Activated CD4-positive, alpha-beta T cell treated with anti-CD3 and anti-CD28 coated beads, Interleukin-2, amount 10 ng/mL, durations not matched to agents 24 days and 14 days (primary cell): ENCODE measurements at regions of chr4 and their contacts with region 1.

Region 1: GRCh38 chr4:176277162-176277904 is 8.3 kb upstream of the ASB5 start:
- DNase-seq: peak; percentile 61
- H3K4me3 Mint-ChIP-seq: no peak overlapping the region
- H3K27ac Mint-ChIP-seq: no peak overlapping the region
- H3K4me1 Mint-ChIP-seq: no peaks in the 10 kb centered on the region
- H3K27me3 Mint-ChIP-seq: peaks cover 3% of the 10 kb centered on the region

Region 2: GRCh38 chr4:176150356-176150682 is 127.0 kb before region 1 on chr4:
- intact Hi-C with region 1: loop called (anchors 5 kb)
- DNase-seq: no peak
- H3K4me3 Mint-ChIP-seq: no peak overlapping the region
- H3K27ac Mint-ChIP-seq: no peak overlapping the region
- H3K4me1 Mint-ChIP-seq: no peaks in the 10 kb centered on the region
- H3K27me3 Mint-ChIP-seq: no peaks in the 10 kb centered on the region

Region 3: GRCh38 chr4:176309046-176309445 is 31.7 kb after region 1 on chr4:
- intact Hi-C with region 1: no loop called
- DNase-seq: no peak
- H3K4me3 Mint-ChIP-seq: no peak overlapping the region
- H3K27ac Mint-ChIP-seq: no peak overlapping the region
- H3K4me1 Mint-ChIP-seq: no peaks in the 10 kb centered on the region
- H3K27me3 Mint-ChIP-seq: peaks cover 15% of the 10 kb centered on the region